Activated B cell treated with CpG ODN at 0.5 μM for 24 hours (primary cell): ENCODE measurements at regions of chr1 and their contacts with region 1.

Region 1: DNA sequence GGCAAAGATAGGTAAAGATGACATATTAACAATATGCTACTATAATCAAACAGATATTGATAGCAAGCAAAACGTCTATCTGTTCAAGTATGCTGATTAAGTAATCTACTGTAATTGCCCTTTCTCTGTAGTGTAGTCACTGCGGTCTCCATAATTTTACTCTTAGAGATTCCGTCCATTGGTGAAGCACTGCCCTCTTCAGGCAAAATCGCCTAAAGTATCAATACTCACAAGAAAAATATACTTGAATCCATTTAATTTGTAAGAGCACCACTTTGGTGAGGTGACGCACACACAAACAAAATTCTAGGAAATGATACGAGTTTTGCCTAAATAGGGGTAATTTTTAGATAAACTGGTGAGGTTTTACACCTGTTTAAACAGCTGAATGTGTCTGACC is 434.6 kb upstream of the CHRM3 start:
- DNase-seq: no peak
- ATAC-seq: no peak
- H3K4me3 Mint-ChIP-seq: no peak overlapping the region
- H3K27ac Mint-ChIP-seq: no peak overlapping the region
- H3K4me1 Mint-ChIP-seq: no peaks in the 10 kb centered on the region
- H3K27me3 Mint-ChIP-seq: no peaks in the 10 kb centered on the region
- CTCF ChIP-seq: no peak

Region 2: GRCh38 chr1:238252033-238252802 is 699.6 kb before region 1 on chr1:
- CTCF ChIA-PET with region 1: no interaction called
- POLR2A ChIA-PET with region 1: no interaction called
- intact Hi-C with region 1: loop called (anchors 2 kb)
- DNase-seq: no peak
- ATAC-seq: no peak
- H3K4me3 Mint-ChIP-seq: no peak overlapping the region
- H3K27ac Mint-ChIP-seq: no peak overlapping the region
- H3K4me1 Mint-ChIP-seq: no peaks in the 10 kb centered on the region
- H3K27me3 Mint-ChIP-seq: no peaks in the 10 kb centered on the region
- CTCF ChIP-seq: no peak

Region 3: DNA sequence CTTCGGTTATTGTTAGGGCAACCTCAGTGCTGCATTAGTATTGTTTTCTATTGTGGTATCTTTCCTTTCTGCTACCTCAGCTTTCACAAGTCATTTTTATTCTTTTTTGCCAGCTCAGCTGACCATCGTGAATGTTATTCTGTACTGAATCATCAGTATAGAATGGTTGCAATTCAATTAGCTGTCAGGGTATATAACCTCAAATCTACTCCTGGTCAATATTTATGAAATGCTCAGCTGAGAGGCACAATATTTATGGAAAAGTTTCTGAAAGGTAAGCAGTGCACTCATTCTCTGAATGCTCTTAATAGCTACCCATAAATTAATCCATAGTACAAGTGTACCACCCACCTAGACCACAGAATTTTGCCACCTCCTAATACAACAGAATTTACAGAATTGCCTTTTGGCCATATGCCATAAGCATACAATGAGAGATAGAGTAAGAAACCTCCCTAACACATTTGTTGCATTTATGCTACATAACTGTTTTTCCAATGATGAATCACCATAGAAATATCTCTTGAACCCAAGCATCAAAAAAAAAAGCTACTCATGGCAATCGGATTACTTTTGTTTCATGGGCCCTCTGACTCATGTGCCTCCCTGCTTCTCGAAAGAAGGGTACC is 298.0 kb before region 1 on chr1:
- CTCF ChIA-PET with region 1: no interaction called
- POLR2A ChIA-PET with region 1: no interaction called
- intact Hi-C with region 1: no loop called
- DNase-seq: no peak
- ATAC-seq: no peak
- H3K4me3 Mint-ChIP-seq: no peak overlapping the region
- H3K27ac Mint-ChIP-seq: no peak overlapping the region
- H3K4me1 Mint-ChIP-seq: no peaks in the 10 kb centered on the region
- H3K27me3 Mint-ChIP-seq: no peaks in the 10 kb centered on the region
- CTCF ChIP-seq: no peak

Region 4: DNA sequence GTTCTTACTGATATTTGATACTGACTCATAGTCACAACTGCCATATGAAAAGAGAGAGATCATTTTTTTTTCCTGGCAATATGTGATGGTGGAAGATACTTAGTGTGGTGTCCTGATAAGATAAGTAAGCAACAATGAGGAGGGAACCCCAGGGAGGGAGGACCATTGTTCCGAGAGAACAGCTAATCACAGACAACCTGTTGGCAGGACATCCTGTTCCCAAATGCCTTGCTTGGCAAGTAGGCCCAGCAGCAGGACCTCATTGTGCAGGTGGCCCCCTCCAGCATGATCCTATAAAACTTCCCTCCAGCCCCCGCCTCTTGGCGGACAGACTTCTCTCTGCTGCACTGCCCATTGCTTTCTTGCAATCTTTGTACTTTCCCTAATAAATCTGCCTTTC is 105.1 kb after region 1 on chr1:
- CTCF ChIA-PET with region 1: no interaction called
- POLR2A ChIA-PET with region 1: no interaction called
- intact Hi-C with region 1: no loop called
- DNase-seq: no peak
- ATAC-seq: no peak
- H3K4me3 Mint-ChIP-seq: no peak overlapping the region
- H3K27ac Mint-ChIP-seq: no peak overlapping the region
- H3K4me1 Mint-ChIP-seq: no peaks in the 10 kb centered on the region
- H3K27me3 Mint-ChIP-seq: no peaks in the 10 kb centered on the region
- CTCF ChIP-seq: no peak